WTC11 (cell line): ENCODE measurements at regions of chr1 and their contacts with region 1.

Region 1: GRCh38 chr1:210250998-210251679 is 18.5 kb downstream of the SERTAD4 start:
- DNase-seq: peak; percentile 79
- ATAC-seq: peak; percentile 52
- H3K4me3 Mint-ChIP-seq: peak overlapping the region; percentile 72
- H3K27ac Mint-ChIP-seq: peak overlapping the region; percentile 53
- H3K4me1 Mint-ChIP-seq: peaks cover 39% of the 10 kb centered on the region
- H3K27me3 Mint-ChIP-seq: peaks cover 17% of the 10 kb centered on the region
- CTCF ChIP-seq: no peak

Region 2: GRCh38 chr1:210233216-210234020 is 17.7 kb before region 1 on chr1:
- CTCF ChIA-PET with region 1: interaction called, 7 read pairs
- POLR2A ChIA-PET with region 1: interaction called, 25 read pairs
- DNase-seq: peak; percentile 42
- ATAC-seq: peak; percentile 43
- H3K4me3 Mint-ChIP-seq: peak overlapping the region; percentile 65
- H3K27ac Mint-ChIP-seq: no peak overlapping the region
- H3K4me1 Mint-ChIP-seq: peaks cover 33% of the 10 kb centered on the region
- H3K27me3 Mint-ChIP-seq: peaks cover 66% of the 10 kb centered on the region
- CTCF ChIP-seq: no peak

Region 3: GRCh38 chr1:210262167-210262896 is 11.2 kb after region 1 on chr1:
- CTCF ChIA-PET with region 1: interaction called, 70 read pairs
- POLR2A ChIA-PET with region 1: interaction called, 11 read pairs
- DNase-seq: no peak
- ATAC-seq: no peak
- H3K4me3 Mint-ChIP-seq: no peak overlapping the region
- H3K27ac Mint-ChIP-seq: no peak overlapping the region
- H3K4me1 Mint-ChIP-seq: peaks cover 19% of the 10 kb centered on the region
- H3K27me3 Mint-ChIP-seq: no peaks in the 10 kb centered on the region; the same call in 1 of the 2 replicates
- CTCF ChIP-seq: no peak

Region 4: GRCh38 chr1:210384630-210385029 is 133.5 kb after region 1 on chr1:
- CTCF ChIA-PET with region 1: no interaction called
- POLR2A ChIA-PET with region 1: no interaction called
- DNase-seq: no peak
- ATAC-seq: no peak
- H3K4me3 Mint-ChIP-seq: no peak overlapping the region
- H3K27ac Mint-ChIP-seq: no peak overlapping the region
- H3K4me1 Mint-ChIP-seq: peaks cover 19% of the 10 kb centered on the region
- H3K27me3 Mint-ChIP-seq: no peaks in the 10 kb centered on the region
- CTCF ChIP-seq: no peak